Activated CD8-positive, alpha-beta T cell treated with anti-CD3 and anti-CD28 coated beads for 36 hours (primary cell): ENCODE measurements at regions of chrX and their contacts with region 1.

Region 1: DNA sequence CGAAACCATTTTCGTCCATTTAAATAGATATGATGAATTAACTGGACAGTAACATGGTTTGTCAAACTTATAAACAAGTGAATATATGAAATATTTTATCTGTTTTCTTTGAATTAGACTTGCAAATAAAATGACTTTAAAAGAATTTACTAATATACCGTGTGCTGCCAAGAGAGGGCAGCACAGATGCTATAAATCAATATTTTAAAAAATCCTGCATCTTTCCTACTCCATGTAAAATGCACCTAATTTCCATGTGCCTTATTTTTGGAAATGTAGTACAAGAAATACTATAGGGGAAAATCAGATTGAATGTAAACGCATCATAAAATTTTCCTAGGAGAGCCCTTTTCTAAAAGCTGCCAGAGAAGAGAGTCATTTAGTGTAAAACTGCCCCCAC is 62.2 kb downstream of the PRKX start:
- DNase-seq: no peak
- ATAC-seq: no peak
- H3K4me3 Mint-ChIP-seq: no peak overlapping the region
- H3K27ac Mint-ChIP-seq: no peak overlapping the region
- H3K4me1 Mint-ChIP-seq: no peaks in the 10 kb centered on the region
- H3K27me3 Mint-ChIP-seq: no peaks in the 10 kb centered on the region
- CTCF ChIP-seq: peak; percentile 58

Region 2: GRCh38 chrX:3699821-3700381 is 48.6 kb after region 1 on chrX:
- CTCF ChIA-PET with region 1: interaction called, 10 read pairs
- POLR2A ChIA-PET with region 1: no interaction called
- intact Hi-C with region 1: no loop called
- DNase-seq: no peak
- ATAC-seq: peak; percentile 77
- H3K4me3 Mint-ChIP-seq: peak overlapping the region; percentile 77
- H3K27ac Mint-ChIP-seq: peak overlapping the region; percentile 93
- H3K4me1 Mint-ChIP-seq: peaks cover 49% of the 10 kb centered on the region
- H3K27me3 Mint-ChIP-seq: no peaks in the 10 kb centered on the region
- CTCF ChIP-seq: no peak

Region 3: GRCh38 chrX:3811331-3812311 is 160.3 kb after region 1 on chrX:
- CTCF ChIA-PET with region 1: interaction called, 11 read pairs
- POLR2A ChIA-PET with region 1: interaction called, 3 read pairs
- intact Hi-C with region 1: no loop called
- DNase-seq: peak; percentile 59
- ATAC-seq: no peak
- H3K4me3 Mint-ChIP-seq: no peak overlapping the region
- H3K27ac Mint-ChIP-seq: peak overlapping the region; percentile 46
- H3K4me1 Mint-ChIP-seq: peaks cover 11% of the 10 kb centered on the region
- H3K27me3 Mint-ChIP-seq: peaks cover 15% of the 10 kb centered on the region
- CTCF ChIP-seq: no peak